ENCODE measurements at regions of chr1 and their contacts with region 1.

Region 1: GRCh38 chr1:62989497-62989896 is 205.6 kb downstream of the ATG4C start:
- DNase-seq: peak in 1 of 42 donors; percentile 15

Region 2: DNA sequence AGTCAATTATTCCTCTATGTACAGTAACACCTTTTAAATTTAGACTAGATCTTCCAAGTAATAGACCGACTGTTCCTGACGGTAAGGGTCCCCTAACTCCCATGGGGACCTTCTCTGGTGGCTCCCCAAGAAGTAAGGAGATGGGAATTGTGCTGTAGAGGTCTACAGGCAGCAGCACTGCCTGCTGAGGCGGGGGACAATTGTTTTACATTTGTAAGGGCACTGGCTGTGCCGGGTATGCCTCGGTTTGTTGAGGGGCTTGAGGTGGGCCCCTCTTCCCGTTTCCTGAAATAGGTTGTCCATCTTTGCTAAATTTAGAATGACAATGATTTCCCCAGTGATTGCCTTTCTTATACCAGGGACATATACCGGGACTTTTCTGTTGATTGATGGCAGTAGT is 808.0 kb before region 1 on chr1:
- intact Hi-C with region 1: no loop called
- DNase-seq: no peak

Region 3: GRCh38 chr1:62841587-62842169 is 147.8 kb before region 1 on chr1:
- intact Hi-C with region 1: loop called (anchors 10 kb)
- DNase-seq: peak in 17 of 42 donors; percentile 15 to 84 (median 47)

Region 4: DNA sequence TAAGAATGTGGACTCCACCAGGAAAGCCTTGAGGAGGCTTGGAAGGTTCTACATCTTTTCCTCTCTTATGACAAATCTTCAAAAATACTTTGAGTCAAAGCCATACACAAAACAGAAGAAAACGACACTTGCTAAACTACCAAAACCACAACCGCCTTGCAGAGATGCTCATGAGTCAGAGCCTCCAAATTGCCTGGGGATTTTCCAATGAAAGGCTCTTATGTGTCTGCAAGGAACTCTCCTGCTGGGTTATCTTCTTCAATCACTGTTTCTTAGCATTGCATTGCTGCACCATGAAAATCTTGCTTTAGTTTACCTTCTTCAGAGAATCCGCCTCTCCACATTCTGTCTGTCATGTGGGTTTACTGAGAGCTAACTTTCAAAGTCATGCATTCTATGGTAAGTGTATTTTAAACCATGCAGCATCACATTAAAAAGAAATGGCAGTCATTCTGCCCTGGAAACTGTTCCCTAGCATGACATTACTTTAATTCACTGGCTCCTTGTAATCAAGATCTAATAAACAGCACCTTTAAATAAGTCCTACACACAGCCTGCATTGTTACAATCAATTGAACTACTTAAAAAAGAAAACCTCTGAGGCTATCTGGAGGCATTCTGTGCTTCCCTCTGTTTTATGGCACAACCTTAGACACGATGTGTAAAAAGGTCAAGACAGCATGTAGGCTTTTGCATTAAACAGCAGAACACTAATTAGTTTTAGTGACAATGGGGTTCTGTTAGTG is 122.8 kb after region 1 on chr1:
- intact Hi-C with region 1: no loop called
- DNase-seq: peak in 13 of 42 donors; percentile 9 to 46 (median 21)